K562 (cell line): ENCODE measurements at regions of chr20 and their contacts with region 1.

Region 1: DNA sequence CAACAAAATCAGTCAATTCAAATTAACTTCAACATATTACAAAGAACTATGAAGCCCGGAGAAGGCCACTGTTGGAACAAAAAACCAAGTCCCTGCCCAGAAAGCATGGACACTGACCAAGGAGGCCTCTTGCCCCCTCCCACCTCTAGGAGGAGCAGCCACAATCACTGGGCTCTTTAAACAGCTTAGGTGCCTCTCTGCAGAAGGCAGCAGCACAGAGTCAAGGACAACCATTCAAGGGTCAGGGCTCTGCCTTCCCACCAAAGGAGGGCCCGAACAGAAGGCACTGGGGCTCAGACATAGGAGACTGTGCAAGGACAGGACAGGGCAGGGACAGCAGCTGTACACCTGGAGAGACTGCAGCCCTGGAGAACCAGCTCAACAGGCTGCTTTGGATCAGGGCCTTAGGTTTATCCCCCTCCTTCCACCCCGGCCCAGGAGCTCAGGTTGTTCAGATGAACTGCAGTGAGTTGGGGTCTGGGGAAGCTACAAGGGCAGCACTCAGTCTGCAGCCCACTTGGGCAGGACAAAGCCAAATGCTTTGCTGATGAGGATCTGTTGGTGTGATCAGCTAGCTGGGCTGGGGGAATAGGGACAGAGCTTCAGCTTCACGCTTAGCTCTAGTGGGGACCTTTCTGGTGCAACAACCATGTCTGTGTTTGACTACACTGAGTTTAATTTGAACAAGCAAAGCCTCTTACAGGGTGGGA is 17.8 kb downstream of the TOMM34 start:
- DNase-seq: peak in 1 of 4 experiments; percentile 20
- ATAC-seq: peak; percentile 87
- H3K4me3 ChIP-seq: no peak overlapping the region
- H3K27ac ChIP-seq: no peak overlapping the region
- H3K4me1 ChIP-seq: no peaks in the 10 kb centered on the region
- H3K27me3 ChIP-seq: no peaks in the 10 kb centered on the region
- CTCF ChIP-seq: peak in 2 of 3 experiments; percentile 28; a peak in 2 of 6 replicates
- EP300 ChIP-seq: no peak
- POLR2A ChIP-seq: peak; percentile 6
- RAD21 ChIP-seq: no peak

Region 2: GRCh38 chr20:44924570-44924969 is 17.8 kb before region 1 on chr20:
- CTCF ChIA-PET with region 1: no interaction called
- POLR2A ChIA-PET with region 1: interaction called, 17 read pairs
- in situ Hi-C with region 1: no loop called
- intact Hi-C with region 1: no loop called
- DNase-seq: no peak
- ATAC-seq: no peak
- H3K4me3 ChIP-seq: no peak overlapping the region
- H3K27ac ChIP-seq: no peak overlapping the region
- H3K4me1 ChIP-seq: peaks cover 0 to 8% of the 10 kb centered on the region in 2 experiments; a peak in 3 of 5 replicates
- H3K27me3 ChIP-seq: no peaks in the 10 kb centered on the region
- CTCF ChIP-seq: no peak
- EP300 ChIP-seq: no peak
- POLR2A ChIP-seq: no peak
- RAD21 ChIP-seq: no peak

Region 3: DNA sequence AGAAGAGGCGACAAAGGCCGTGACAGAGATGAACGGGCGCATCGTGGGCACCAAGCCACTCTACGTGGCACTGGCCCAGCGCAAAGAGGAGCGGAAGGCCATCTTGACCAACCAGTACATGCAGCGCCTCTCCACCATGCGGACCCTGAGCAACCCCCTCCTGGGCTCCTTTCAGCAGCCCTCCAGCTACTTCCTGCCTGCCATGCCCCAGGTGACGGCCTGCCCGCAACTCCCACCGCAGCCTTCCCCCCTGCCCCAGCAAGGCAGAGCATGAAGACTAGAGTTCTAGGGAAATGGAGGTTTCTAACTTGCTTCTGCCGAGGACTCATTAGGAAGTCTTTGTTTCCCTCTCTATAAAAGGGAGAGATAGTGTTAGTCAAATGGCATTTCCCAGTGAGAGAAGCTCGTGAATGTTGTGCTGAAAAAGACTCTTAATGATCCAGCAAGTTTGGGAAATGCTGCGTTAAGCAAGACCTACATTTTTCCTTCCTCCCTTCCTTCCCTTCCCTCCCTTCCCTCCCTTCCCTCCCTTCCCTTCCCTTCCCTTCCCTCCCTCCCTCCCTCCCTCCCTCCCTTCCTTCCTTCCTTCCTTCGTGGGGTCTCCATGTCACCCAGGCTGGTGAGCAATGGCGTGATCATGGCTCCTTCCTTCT is 11.8 kb before region 1 on chr20:
- CTCF ChIA-PET with region 1: no interaction called
- POLR2A ChIA-PET with region 1: interaction called, 17 read pairs
- in situ Hi-C with region 1: no loop called
- intact Hi-C with region 1: no loop called
- DNase-seq: no peak
- ATAC-seq: no peak
- H3K4me3 ChIP-seq: no peak overlapping the region
- H3K27ac ChIP-seq: no peak overlapping the region
- H3K4me1 ChIP-seq: no peaks in the 10 kb centered on the region
- H3K27me3 ChIP-seq: no peaks in the 10 kb centered on the region
- CTCF ChIP-seq: no peak
- EP300 ChIP-seq: no peak
- POLR2A ChIP-seq: no peak
- RAD21 ChIP-seq: no peak

Region 4: DNA sequence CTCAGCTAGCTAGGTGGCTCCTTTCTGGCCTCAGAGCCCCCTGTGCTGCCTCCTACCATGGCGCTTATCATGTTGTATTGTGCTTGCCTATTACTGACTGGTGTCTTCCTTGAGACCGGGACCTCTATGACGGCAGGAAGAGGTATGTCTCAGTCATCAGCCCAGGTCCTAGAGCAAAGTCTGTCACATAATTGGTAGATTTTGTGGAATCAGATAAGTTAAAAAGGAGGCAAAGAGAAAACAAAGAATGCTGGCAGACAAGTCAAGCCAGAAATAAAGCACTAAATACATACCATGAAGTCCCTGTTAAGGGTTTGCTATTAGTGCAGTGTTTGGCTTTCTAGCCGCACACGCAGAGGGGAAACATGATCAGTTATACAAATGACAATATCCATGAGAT is 11.7 kb after region 1 on chr20:
- CTCF ChIA-PET with region 1: no interaction called
- POLR2A ChIA-PET with region 1: interaction called, 36 read pairs
- in situ Hi-C with region 1: no loop called
- intact Hi-C with region 1: no loop called
- DNase-seq: peak in 1 of 4 experiments; percentile 4
- ATAC-seq: no peak
- H3K4me3 ChIP-seq: no peak overlapping the region
- H3K27ac ChIP-seq: no peak overlapping the region
- H3K4me1 ChIP-seq: peaks cover 3 to 9% of the 10 kb centered on the region in 2 experiments; a peak in 3 of 5 replicates
- H3K27me3 ChIP-seq: no peaks in the 10 kb centered on the region
- CTCF ChIP-seq: no peak
- EP300 ChIP-seq: no peak
- POLR2A ChIP-seq: no peak
- RAD21 ChIP-seq: no peak

Region 5: GRCh38 chr20:44960103-44960852 is 17.9 kb after region 1 on chr20 and contains the start of gene TOMM34:
- CTCF ChIA-PET with region 1: no interaction called
- POLR2A ChIA-PET with region 1: interaction called, 13 read pairs
- in situ Hi-C with region 1: no loop called
- intact Hi-C with region 1: no loop called
- DNase-seq: peak; percentile 96 to 98 (median 98)
- ATAC-seq: peak; percentile 97
- H3K4me3 ChIP-seq: peak within 1 kb of the TSS; percentile 64
- H3K27ac ChIP-seq: peak within 1 kb of the TSS; percentile 81
- H3K4me1 ChIP-seq: peaks cover 23 to 43% of the 10 kb centered on the region in 2 experiments
- H3K27me3 ChIP-seq: no peaks in the 10 kb centered on the region
- CTCF ChIP-seq: no peak; a peak in 1 of 6 replicates
- EP300 ChIP-seq: no peak
- POLR2A ChIP-seq: peak; percentile 90
- RAD21 ChIP-seq: no peak
- polyA plus RNA-seq, gene TOMM34: 18.1 to 32.6 TPM

Region 6: DNA sequence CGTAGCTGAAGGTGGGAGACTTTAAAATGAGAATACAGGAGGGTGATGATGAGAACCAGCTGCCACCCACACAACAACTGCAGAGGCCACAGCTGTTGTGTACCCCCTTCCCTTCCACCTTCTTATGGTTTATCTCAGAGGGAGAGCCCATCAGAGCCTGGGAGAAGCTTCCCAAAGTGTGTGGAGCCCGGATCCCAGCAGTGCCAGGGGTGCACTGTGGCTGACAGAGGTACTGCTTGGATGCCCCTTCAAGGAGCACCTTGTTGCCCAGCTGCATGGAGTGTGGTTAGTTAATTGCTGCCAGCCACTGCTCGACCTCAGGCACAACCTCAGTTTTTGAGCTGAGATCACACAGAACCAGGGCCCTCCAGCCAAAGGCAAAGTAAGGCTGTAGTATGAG is 245.2 kb after region 1 on chr20:
- CTCF ChIA-PET with region 1: no interaction called
- POLR2A ChIA-PET with region 1: no interaction called
- in situ Hi-C with region 1: no loop called
- intact Hi-C with region 1: no loop called
- DNase-seq: no peak
- ATAC-seq: no peak
- H3K4me3 ChIP-seq: no peak overlapping the region
- H3K27ac ChIP-seq: no peak overlapping the region
- H3K4me1 ChIP-seq: no peaks in the 10 kb centered on the region
- H3K27me3 ChIP-seq: no peaks in the 10 kb centered on the region; a peak in 1 of 5 replicates
- CTCF ChIP-seq: no peak
- EP300 ChIP-seq: no peak
- POLR2A ChIP-seq: no peak
- RAD21 ChIP-seq: no peak